Caco-2 (cell line): ENCODE measurements at regions of chr7 and their contacts with region 1.

Region 1: DNA sequence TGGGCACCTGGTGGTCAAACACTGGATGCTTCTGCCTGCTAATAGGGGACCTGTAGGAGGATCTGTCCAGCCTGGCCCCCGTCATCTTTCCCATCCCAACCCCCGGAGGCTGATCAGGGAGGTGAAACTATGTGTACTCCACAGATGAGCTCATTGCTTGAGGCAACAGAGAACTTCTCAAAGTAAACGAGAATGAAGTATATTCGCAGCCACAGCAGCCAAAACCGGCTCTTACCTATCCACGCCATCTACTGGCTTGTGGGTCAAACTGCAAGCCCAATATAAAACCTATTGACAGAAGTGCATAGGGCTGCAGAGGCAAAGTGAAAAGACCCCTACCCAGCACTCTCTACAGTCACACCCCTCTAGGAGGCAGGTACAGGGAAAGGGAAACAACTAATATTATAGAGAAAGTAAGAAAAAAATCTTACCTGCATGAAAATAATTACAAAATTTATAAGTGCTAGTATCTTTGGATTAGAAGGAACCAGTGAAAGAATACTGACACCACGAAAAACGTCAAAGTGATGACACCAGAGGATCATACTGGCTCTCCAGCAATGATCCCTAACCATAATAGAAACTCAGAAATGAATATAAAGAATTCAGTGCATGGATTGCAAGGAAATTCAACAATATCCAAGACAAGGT is 973.5 kb downstream of the ANKRD7 start:
- DNase-seq: peak; percentile 57 to 65
- H3K4me3 ChIP-seq: no peak overlapping the region
- H3K4me3 Mint-ChIP-seq: no peak overlapping the region
- H3K27ac Mint-ChIP-seq: no peak overlapping the region
- H3K4me1 ChIP-seq: no peaks in the 10 kb centered on the region
- H3K4me1 Mint-ChIP-seq: no peaks in the 10 kb centered on the region
- H3K27me3 ChIP-seq: no peaks in the 10 kb centered on the region
- H3K27me3 Mint-ChIP-seq: no peaks in the 10 kb centered on the region
- CTCF ChIP-seq: peak; percentile 81 to 87

Region 2: DNA sequence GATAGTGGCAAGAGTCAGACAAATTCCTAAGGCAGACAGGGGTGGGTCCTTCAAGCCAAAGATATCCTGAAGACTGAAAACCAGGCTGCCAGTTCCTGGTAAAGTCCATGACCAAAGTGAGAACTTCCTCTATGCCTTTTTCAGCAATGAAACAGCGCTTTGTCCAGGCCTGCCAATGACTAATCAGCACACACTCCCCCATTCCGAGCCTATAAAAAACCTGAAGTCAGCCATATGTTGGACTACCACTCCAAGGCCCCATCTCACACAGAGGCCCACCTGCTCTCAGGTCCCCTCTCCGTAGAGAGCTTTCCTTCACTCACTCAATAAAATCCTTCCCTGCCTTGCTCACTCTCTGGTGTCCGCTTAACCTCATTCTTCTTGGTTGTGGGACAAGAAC is 571.3 kb before region 1 on chr7:
- CTCF ChIA-PET with region 1: no interaction called
- POLR2A ChIA-PET with region 1: no interaction called
- intact Hi-C with region 1: no loop called
- DNase-seq: no peak
- H3K4me3 ChIP-seq: no peak overlapping the region
- H3K4me3 Mint-ChIP-seq: no peak overlapping the region
- H3K27ac Mint-ChIP-seq: no peak overlapping the region
- H3K4me1 ChIP-seq: no peaks in the 10 kb centered on the region
- H3K4me1 Mint-ChIP-seq: no peaks in the 10 kb centered on the region
- H3K27me3 ChIP-seq: no peaks in the 10 kb centered on the region
- H3K27me3 Mint-ChIP-seq: peaks cover 2% of the 10 kb centered on the region
- CTCF ChIP-seq: no peak

Region 3: GRCh38 chr7:118870187-118870586 is 327.8 kb before region 1 on chr7:
- CTCF ChIA-PET with region 1: no interaction called
- POLR2A ChIA-PET with region 1: no interaction called
- intact Hi-C with region 1: loop called (anchors 1 kb)
- DNase-seq: peak in 1 of 2 experiments; percentile 25
- H3K4me3 ChIP-seq: no peak overlapping the region
- H3K4me3 Mint-ChIP-seq: no peak overlapping the region
- H3K27ac Mint-ChIP-seq: no peak overlapping the region
- H3K4me1 ChIP-seq: no peaks in the 10 kb centered on the region
- H3K4me1 Mint-ChIP-seq: no peaks in the 10 kb centered on the region
- H3K27me3 ChIP-seq: no peaks in the 10 kb centered on the region
- H3K27me3 Mint-ChIP-seq: no peaks in the 10 kb centered on the region
- CTCF ChIP-seq: peak; percentile 37 to 48

Region 4: DNA sequence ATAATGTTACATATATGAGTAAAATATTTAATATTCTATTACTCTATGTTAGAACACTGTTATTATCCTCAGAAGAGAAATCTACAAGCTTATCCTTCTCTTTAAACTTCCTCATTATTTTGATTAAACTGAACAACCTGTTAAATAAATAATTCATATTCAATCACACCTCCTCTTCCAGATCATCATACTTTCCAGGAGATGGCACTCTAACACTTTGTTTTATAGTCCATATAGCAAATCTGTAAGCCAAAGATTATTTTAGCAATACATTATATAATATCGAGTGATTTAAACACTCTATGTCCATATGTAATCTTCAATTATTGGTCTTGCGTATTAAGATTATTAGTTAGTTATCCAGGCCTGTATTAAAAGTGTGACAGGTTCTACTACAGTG is 279.4 kb before region 1 on chr7:
- CTCF ChIA-PET with region 1: no interaction called
- POLR2A ChIA-PET with region 1: no interaction called
- intact Hi-C with region 1: loop called (anchors 1 kb)
- DNase-seq: peak in 1 of 2 experiments; percentile 3
- H3K4me3 ChIP-seq: no peak overlapping the region
- H3K4me3 Mint-ChIP-seq: no peak overlapping the region
- H3K27ac Mint-ChIP-seq: no peak overlapping the region
- H3K4me1 ChIP-seq: no peaks in the 10 kb centered on the region
- H3K4me1 Mint-ChIP-seq: no peaks in the 10 kb centered on the region
- H3K27me3 ChIP-seq: no peaks in the 10 kb centered on the region
- H3K27me3 Mint-ChIP-seq: no peaks in the 10 kb centered on the region
- CTCF ChIP-seq: peak in 1 of 2 experiments; percentile 20

Region 5: DNA sequence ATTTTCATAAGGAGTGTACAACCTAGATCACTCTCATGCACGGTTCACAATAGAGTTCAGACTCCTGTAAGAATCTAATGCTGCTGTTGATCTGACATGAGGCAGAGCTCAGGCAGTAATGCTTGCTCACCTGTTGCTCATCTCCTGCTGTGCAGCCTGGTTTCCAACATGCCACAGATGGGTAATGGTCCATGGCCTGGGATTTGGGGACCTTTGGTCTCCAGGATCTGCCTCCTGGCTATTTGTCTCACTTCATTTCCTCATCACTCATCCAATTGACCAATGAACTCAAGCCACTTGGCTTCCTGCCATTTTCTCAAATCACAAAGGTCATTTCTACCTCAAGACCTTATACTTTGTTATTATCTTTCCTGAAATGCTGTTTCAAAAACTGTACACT is 187.4 kb before region 1 on chr7:
- CTCF ChIA-PET with region 1: no interaction called
- POLR2A ChIA-PET with region 1: no interaction called
- intact Hi-C with region 1: no loop called
- DNase-seq: no peak
- H3K4me3 ChIP-seq: no peak overlapping the region
- H3K4me3 Mint-ChIP-seq: no peak overlapping the region
- H3K27ac Mint-ChIP-seq: no peak overlapping the region
- H3K4me1 ChIP-seq: no peaks in the 10 kb centered on the region
- H3K4me1 Mint-ChIP-seq: no peaks in the 10 kb centered on the region
- H3K27me3 ChIP-seq: no peaks in the 10 kb centered on the region
- H3K27me3 Mint-ChIP-seq: no peaks in the 10 kb centered on the region
- CTCF ChIP-seq: no peak

Region 6: DNA sequence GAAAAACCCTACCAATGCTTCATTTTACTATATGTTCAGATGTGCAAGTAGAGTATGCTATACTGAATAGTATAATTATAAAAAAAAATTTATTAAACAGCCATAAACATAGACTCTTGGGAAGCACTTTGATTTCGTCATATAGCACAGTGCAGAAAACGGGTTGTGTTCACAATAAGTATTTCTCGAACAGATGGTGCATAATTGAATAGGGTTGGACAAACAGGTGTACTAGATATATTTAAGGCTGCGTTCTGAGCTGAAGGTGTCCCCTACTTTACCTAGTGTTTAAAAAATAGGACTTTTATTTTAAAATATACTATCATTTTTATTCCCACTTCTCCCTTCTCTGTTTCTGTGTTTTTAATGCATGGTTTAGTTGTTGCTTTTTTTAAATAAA is 132.0 kb before region 1 on chr7:
- CTCF ChIA-PET with region 1: no interaction called
- POLR2A ChIA-PET with region 1: no interaction called
- intact Hi-C with region 1: loop called (anchors 2 kb)
- DNase-seq: no peak
- H3K4me3 ChIP-seq: no peak overlapping the region
- H3K4me3 Mint-ChIP-seq: no peak overlapping the region
- H3K27ac Mint-ChIP-seq: no peak overlapping the region
- H3K4me1 ChIP-seq: no peaks in the 10 kb centered on the region
- H3K4me1 Mint-ChIP-seq: no peaks in the 10 kb centered on the region
- H3K27me3 ChIP-seq: no peaks in the 10 kb centered on the region
- H3K27me3 Mint-ChIP-seq: peaks cover 3% of the 10 kb centered on the region
- CTCF ChIP-seq: no peak